Mucosa of descending colon (tissue), 3 donors: ENCODE measurements at regions of chr3 and their contacts with region 1.

Region 1: GRCh38 chr3:139329345-139329850 is 14.4 kb upstream of the MRPS22 start:
- DNase-seq: peak; percentile 90 to 94 (median 93)
- ATAC-seq: peak; percentile 100
- H3K4me3 ChIP-seq: no peak overlapping the region
- H3K4me1 ChIP-seq: peaks cover 6% of the 10 kb centered on the region
- CTCF ChIP-seq: peak; percentile 97

Region 2: DNA sequence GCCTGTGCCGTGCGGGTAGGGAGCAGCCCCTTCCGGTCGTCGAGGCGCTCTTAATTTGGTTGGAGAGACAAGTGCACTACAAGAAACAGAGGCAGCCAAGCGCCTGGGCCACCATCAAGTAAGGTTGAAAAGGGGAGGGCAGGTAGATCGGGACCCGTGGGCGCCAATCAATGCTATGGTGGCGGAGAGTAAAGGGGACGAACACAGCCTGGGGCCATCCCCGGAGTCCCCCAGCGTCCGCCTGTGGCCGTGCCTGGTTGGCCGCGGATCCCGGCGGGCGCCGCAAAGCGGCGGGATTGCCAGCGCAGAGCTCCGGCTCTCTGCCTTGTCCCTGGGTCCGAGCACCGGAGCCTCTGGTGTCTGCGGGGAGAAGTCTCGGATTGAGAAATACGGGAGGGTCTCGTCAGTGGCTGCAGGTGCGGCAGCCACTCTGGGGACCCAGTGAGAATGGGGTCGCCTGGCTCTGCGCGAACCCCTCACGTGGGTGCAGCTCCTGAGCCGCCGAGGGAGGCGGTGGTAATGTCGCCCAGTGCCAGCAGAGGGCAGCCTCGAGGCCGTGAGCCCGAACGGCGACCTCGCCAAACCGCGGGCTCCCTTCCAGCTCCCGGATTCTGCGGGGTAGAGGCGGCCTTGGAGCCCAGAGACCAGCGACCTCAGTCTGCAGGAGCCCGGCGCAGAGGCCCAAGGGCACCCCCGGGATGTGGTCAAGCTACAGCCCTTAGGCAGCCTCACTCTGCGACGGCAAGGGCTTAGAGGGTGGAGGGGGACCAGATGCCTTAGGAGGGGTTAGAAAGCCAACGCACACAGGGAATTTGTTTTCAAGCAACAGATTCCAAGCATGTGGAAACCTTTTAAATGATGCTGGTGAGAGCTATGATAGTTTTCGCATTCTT is 393.3 kb before region 1 on chr3:
- intact Hi-C with region 1: loop called (anchors 10 kb)
- DNase-seq: peak; percentile 73 to 84 (median 81)
- ATAC-seq: peak; percentile 92
- H3K4me3 ChIP-seq: no peak overlapping the region
- H3K4me1 ChIP-seq: peaks cover 30% of the 10 kb centered on the region
- CTCF ChIP-seq: peak; percentile 87

Region 3: DNA sequence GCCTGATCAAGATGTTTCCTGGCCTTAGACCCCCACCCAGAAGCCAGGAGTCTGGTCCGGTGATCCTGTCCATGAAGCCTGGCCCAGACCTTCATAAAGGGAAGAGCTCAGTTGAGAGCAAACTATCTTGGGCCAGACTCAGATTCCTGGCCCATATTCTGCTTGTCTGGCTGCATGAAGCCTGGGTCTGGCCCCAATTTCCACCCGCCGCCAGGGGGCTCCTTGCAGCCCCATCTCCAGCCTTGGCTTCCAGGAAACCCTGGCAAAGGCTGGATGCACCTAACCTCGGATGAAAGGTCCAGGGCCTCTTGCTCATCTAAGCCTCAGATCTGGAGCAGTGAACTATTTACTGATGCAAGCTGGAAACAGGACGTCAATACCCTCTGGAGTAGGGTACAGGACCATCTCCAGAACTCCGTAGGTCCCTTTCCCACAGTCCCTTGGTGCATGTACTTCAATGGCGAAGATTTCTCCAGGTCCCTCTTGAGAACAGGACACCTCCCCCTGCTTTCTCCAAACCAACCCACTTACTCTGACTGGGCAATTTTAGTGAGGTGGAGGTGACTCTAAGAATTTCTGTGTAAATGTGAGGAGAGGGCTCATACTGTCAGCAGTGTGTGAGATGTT is 388.0 kb before region 1 on chr3:
- intact Hi-C with region 1: loop called (anchors 10 kb)
- DNase-seq: peak in 2 of 3 donors; percentile 77 to 79
- ATAC-seq: peak; percentile 62
- H3K4me3 ChIP-seq: no peak overlapping the region
- H3K4me1 ChIP-seq: peaks cover 40% of the 10 kb centered on the region
- CTCF ChIP-seq: peak; percentile 41

Region 4: GRCh38 chr3:139111392-139112229 is 217.8 kb before region 1 on chr3:
- intact Hi-C with region 1: loop called in 1 of 2 experiments (anchors 5 kb)
- DNase-seq: peak; percentile 60 to 87 (median 82)
- ATAC-seq: peak; percentile 87
- H3K4me3 ChIP-seq: no peak overlapping the region
- H3K4me1 ChIP-seq: peaks cover 5% of the 10 kb centered on the region
- CTCF ChIP-seq: peak; percentile 62

Region 5: DNA sequence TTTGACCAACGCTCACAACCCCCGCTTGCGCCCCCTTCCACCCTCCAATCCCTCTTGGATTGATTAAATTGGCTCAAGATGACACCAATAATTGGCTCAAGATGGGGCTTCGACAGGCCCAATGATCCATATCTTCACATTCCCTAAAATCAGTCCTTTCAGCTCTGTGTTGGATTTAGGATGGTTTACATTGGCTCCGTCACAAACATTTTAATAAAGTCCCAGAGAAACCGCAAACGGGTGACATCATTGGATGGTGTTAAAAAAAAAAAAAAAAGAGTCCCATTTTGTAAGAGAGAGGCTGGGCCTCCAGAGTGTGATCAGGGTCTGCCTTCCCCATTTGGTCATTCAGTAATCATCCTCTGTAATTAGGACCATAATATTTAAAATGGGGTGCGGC is 99.0 kb before region 1 on chr3:
- intact Hi-C with region 1: no loop called
- DNase-seq: no peak
- ATAC-seq: no peak
- H3K4me3 ChIP-seq: no peak overlapping the region
- H3K4me1 ChIP-seq: no peaks in the 10 kb centered on the region
- CTCF ChIP-seq: no peak

Region 6: DNA sequence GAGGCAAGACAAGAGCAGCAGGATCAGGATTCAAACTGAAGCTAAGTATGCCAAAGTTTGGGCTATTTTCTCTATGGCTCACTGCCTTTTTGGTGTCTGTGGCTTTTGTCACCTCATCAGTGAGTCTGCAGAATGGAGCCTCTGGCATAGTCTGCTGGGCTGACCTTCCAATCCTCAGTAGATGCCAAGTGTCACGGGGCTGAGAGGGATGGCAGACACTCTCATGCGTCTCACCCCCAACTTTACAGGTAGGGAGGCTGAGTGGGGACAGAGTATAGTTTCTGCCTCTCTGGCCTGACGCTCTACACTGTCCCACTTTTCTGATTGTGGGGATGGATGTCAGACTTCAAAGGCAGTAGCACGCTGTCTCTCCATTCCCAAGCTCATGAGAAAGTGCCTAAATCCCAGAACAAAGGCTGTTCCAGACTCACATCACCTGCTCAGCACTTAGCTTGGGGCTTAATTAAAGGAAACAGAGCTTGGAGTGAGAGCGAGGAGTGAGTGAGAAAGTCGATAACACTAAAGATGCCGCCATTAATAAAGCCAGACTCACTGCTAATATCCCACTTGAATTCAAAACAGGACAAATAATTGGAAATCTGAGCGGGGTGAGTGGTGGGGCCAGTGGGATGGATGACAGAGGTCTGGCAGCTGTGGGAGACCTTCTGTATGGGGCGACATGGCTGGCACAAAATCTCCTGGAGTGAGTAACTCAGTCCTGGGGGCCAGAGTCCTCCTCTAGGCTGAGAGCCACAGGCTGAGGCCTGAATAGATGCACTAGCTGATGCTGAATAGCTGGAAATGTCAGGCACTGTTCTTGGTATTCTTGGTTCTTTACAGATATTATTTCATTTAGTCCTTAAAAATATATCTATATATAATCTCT is 64.0 kb before region 1 on chr3:
- intact Hi-C with region 1: no loop called
- DNase-seq: no peak
- ATAC-seq: no peak
- H3K4me3 ChIP-seq: no peak overlapping the region
- H3K4me1 ChIP-seq: no peaks in the 10 kb centered on the region
- CTCF ChIP-seq: no peak

Region 7: GRCh38 chr3:139374099-139374498 is 44.7 kb after region 1 on chr3:
- intact Hi-C with region 1: no loop called
- DNase-seq: no peak
- ATAC-seq: no peak
- H3K4me3 ChIP-seq: no peak overlapping the region
- H3K4me1 ChIP-seq: no peaks in the 10 kb centered on the region
- CTCF ChIP-seq: no peak

Region 8: DNA sequence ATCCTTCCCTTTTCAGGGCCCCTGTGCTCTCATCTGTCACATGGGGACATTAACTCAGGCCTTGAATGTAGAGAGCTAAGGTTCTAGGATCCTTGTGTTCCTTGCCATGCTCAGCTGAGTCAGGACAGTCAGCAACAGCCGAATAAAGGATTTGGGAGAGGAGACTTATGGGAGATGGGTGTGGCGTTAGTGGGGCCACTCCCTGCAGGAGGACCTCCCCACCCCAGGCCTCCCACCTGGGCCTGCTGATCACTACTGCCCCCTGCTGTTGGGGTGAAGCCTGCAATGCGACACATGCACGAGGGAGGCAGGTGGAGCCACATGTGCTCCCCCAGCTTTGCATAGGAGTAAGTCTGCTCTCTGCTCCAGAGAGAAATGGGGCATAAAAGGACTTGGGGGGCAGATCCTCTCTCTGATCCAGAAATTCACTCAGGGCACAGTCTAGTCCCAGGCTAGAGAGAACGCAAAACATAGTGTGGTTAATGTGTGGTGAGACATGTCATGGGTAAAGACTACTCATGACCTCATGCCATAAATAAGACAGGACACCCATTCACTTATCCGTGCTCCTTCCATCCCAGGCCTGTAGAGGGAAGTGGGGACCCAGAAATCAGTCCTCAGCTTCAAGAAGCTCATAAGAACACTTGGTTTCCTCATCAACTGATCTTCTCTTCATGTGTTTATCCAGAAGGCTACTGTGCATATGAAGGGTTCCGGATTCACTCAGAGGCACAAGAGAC is 190.8 kb after region 1 on chr3:
- intact Hi-C with region 1: no loop called
- DNase-seq: peak in 2 of 3 donors; percentile 33 to 55
- ATAC-seq: peak; percentile 80
- H3K4me3 ChIP-seq: no peak overlapping the region
- H3K4me1 ChIP-seq: no peaks in the 10 kb centered on the region
- CTCF ChIP-seq: no peak